CD14-positive monocyte (primary cell): ENCODE measurements at regions of chr11 and their contacts with region 1.

Region 1: DNA sequence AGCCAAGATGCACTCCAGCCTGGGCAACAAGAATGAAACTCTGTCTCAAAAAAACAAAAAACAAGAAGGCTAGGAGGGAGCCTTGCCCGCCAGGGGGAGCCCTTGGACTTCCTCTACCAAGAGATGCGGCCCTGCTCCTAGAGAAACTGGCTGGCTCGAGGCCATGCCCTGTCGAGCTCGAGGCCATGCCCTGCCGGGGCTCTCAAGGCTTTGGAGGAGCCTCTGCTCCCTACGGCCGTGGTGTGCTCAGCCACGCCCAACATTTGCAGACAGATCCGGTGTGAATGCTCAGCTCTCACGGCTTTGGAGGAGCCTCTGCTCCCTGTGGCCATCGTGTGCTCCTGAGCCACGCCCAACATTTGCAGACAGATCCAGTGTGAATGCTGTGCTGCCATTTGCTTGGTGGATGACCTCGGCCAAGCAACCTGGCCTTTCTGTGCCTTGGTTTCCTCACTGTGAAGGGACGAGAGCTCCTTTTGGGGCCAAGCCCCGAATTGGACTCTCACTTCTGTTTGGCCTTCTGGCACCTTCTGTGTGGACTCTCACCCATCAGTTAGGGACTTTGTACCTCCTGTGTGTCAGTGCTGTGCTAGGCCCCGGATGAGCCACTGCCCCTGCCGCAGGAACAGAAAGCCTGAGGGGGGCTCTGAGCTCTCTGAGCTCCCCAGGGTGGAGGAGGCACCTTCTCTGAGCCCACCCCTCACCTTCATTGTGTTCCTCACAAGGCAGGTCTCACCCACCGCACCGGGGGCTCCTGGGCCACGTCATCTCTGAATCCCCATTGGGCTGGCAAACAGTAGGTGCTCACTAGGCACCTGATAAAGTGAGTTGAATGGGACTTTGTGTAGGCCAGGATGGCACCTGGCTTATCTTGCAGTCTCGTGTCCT is 14.1 kb downstream of the C11orf24 start:
- DNase-seq: peak; percentile 83 to 91 (median 86)
- H3K4me3 ChIP-seq: no peak overlapping the region
- H3K4me3 Mint-ChIP-seq: peak overlapping the region in 1 of 2 donors; percentile 81
- H3K27ac ChIP-seq: no peak overlapping the region
- H3K27ac Mint-ChIP-seq: no peak overlapping the region
- H3K4me1 ChIP-seq: peaks cover 4 to 7% of the 10 kb centered on the region in 2 donors
- H3K4me1 Mint-ChIP-seq: peaks cover 7% of the 10 kb centered on the region
- H3K27me3 ChIP-seq: no peaks in the 10 kb centered on the region
- H3K27me3 Mint-ChIP-seq: peaks cover 0 to 9% (median 3%) of the 10 kb centered on the region in 3 donors
- CTCF ChIP-seq: peak; percentile 89

Region 2: GRCh38 chr11:68297812-68298658 is 40.3 kb after region 1 on chr11:
- intact Hi-C with region 1: loop called (anchors 1 kb)
- DNase-seq: peak; percentile 74 to 76 (median 75)
- H3K4me3 ChIP-seq: no peak overlapping the region
- H3K4me3 Mint-ChIP-seq: peak overlapping the region in 1 of 2 donors; percentile 11
- H3K27ac ChIP-seq: no peak overlapping the region
- H3K27ac Mint-ChIP-seq: no peak overlapping the region
- H3K4me1 ChIP-seq: peaks cover 16 to 18% of the 10 kb centered on the region in 2 donors
- H3K4me1 Mint-ChIP-seq: peaks cover 22% of the 10 kb centered on the region
- H3K27me3 ChIP-seq: no peaks in the 10 kb centered on the region
- H3K27me3 Mint-ChIP-seq: peaks cover 1 to 9% (median 2%) of the 10 kb centered on the region in 3 donors
- CTCF ChIP-seq: peak; percentile 95

Region 3: DNA sequence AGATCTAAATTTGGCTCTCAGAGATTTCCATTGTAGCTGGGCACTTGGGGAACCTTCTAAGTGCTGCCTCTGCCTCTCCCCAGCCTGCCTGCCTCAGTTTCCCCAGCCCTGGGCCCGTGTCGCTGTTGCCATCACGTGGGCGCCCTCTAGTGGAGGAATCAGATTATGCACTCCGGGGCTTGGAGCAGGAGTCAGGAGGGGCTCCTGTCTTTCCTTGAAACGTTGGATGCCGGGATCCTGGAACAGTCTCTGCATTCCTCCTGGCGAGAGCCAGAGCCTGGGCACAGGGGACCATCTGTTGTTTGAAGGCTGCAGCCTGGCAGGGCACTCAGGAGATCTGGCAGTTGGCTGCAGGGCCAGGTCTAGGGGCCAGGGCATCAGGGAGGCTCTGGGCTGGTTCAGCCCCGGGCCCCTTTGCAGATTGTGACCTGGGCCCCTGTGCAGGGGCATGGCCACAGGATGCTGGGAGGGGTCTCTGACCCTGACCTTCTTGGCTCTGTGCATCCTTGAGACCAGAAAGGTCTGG is 126.3 kb after region 1 on chr11:
- intact Hi-C with region 1: loop called in 1 of 2 experiments (anchors 5 kb)
- DNase-seq: peak; percentile 23 to 55 (median 34)
- H3K4me3 ChIP-seq: no peak overlapping the region
- H3K4me3 Mint-ChIP-seq: no peak overlapping the region
- H3K27ac ChIP-seq: no peak overlapping the region
- H3K27ac Mint-ChIP-seq: no peak overlapping the region
- H3K4me1 ChIP-seq: peaks cover 10 to 13% of the 10 kb centered on the region in 2 donors
- H3K4me1 Mint-ChIP-seq: peaks cover 29% of the 10 kb centered on the region
- H3K27me3 ChIP-seq: no peaks in the 10 kb centered on the region
- H3K27me3 Mint-ChIP-seq: peaks cover 12 to 24% (median 16%) of the 10 kb centered on the region in 3 donors
- CTCF ChIP-seq: peak; percentile 99

Region 4: GRCh38 chr11:68398995-68399851 is 141.5 kb after region 1 on chr11:
- intact Hi-C with region 1: loop called in 1 of 2 experiments (anchors 10 kb)
- DNase-seq: no peak
- H3K4me3 ChIP-seq: no peak overlapping the region
- H3K4me3 Mint-ChIP-seq: no peak overlapping the region
- H3K27ac ChIP-seq: no peak overlapping the region
- H3K27ac Mint-ChIP-seq: no peak overlapping the region
- H3K4me1 ChIP-seq: no peaks in the 10 kb centered on the region
- H3K4me1 Mint-ChIP-seq: no peaks in the 10 kb centered on the region
- H3K27me3 ChIP-seq: no peaks in the 10 kb centered on the region
- H3K27me3 Mint-ChIP-seq: peaks cover 0 to 4% (median 0%) of the 10 kb centered on the region in 3 donors
- CTCF ChIP-seq: no peak

Region 5: DNA sequence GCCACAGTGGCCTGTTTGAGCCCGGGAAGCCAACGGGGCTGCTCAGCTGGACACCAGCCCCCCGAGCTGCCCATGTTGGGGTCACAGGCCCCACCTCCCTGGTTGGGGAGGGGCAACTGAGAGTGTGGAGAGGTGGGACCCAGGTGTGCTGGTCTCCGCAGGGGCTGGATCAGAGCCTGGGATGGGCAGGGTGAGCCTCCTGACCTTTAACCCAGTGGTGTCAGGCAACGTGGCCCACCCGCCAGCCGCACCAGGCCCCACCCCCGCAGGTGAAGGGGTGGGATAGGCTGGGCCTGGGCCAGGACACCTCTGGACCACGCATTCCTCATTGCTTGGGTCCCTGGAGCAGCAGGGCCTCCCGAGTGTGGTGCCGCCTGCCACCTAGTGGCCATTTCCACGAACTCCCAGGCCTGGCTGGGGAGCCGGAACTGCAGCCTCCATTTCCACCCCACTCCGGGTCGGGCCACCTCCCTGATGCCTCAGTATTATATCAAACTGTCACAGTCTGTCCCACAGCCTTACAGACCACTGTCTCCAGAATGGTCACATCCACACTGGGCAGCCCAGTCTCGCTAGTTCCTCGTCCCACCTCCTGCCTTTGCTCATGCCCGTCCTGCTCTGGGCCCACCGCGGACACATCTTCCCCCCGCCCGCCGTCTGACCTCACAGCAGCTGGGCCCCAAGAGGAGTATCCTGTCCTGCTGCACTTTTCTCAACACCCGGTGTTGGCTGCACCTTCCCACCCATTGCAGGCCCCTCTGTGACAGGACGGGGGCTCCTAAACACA is 189.5 kb after region 1 on chr11:
- intact Hi-C with region 1: loop called (anchors 5 to 10 kb)
- DNase-seq: peak; percentile 66 to 75 (median 74)
- H3K4me3 ChIP-seq: no peak overlapping the region
- H3K4me3 Mint-ChIP-seq: no peak overlapping the region
- H3K27ac ChIP-seq: no peak overlapping the region
- H3K27ac Mint-ChIP-seq: peak overlapping the region in 2 of 7 donors; percentile 43 to 66
- H3K4me1 ChIP-seq: no peaks in the 10 kb centered on the region
- H3K4me1 Mint-ChIP-seq: peaks cover 4% of the 10 kb centered on the region
- H3K27me3 ChIP-seq: no peaks in the 10 kb centered on the region
- H3K27me3 Mint-ChIP-seq: peaks cover under 1 to 7% (median 3%) of the 10 kb centered on the region in 3 donors
- CTCF ChIP-seq: peak; percentile 93